MCF 10A (cell line): ENCODE measurements at regions of chr1 and their contacts with region 1.

Region 1: GRCh38 chr1:196309386-196309785 is 298.9 kb downstream of the KCNT2 start:
- DNase-seq: peak; percentile 62
- H3K4me3 Mint-ChIP-seq: no peak overlapping the region
- H3K27ac Mint-ChIP-seq: no peak overlapping the region
- H3K4me1 Mint-ChIP-seq: no peaks in the 10 kb centered on the region
- H3K27me3 Mint-ChIP-seq: no peaks in the 10 kb centered on the region
- CTCF ChIP-seq: peak; percentile 69

Region 2: DNA sequence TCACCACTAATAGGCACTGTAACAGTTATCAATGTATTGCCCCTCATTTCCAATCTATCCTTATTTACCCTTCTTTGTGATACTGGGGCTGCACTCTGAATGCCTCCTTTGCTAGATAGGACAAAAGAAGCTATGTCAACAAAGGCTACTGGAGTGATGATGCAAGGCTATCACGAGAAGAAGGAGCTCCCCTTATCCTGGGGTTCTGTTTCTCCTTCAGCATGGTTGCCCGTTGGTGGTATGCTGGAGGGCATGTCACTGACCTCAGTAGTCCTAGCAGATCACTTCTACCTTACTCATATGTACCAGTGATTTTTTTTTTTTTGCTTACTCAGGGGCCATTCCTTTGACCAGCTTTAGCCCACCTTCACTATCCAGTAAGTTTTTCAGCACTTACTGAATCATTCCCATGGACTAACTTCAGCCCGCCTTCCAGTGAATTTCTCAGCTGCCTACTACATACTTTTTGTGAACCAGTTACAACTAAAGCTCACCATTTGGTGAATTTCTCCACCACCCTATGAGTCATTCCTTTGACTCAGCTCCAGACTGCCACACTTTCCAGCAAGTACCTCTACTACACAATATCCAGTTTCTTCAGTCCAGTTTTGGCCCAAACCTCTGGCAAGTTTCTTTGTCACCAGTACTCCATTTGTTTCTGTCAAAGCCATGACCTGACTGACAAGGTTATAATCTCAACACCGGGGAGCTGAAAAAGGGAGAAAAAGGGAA is 645.7 kb before region 1 on chr1:
- CTCF ChIA-PET with region 1: no interaction called
- POLR2A ChIA-PET with region 1: no interaction called
- intact Hi-C with region 1: no loop called
- DNase-seq: peak; percentile 96
- H3K4me3 Mint-ChIP-seq: peak overlapping the region; percentile 12
- H3K27ac Mint-ChIP-seq: peak overlapping the region; percentile 73
- H3K4me1 Mint-ChIP-seq: peaks cover 18% of the 10 kb centered on the region
- H3K27me3 Mint-ChIP-seq: no peaks in the 10 kb centered on the region
- CTCF ChIP-seq: no peak

Region 3: GRCh38 chr1:195804547-195804946 is 504.8 kb before region 1 on chr1:
- CTCF ChIA-PET with region 1: no interaction called
- POLR2A ChIA-PET with region 1: no interaction called
- intact Hi-C with region 1: loop called (anchors 10 kb)
- DNase-seq: peak; percentile 25
- H3K4me3 Mint-ChIP-seq: no peak overlapping the region
- H3K27ac Mint-ChIP-seq: no peak overlapping the region
- H3K4me1 Mint-ChIP-seq: peaks cover 6% of the 10 kb centered on the region
- H3K27me3 Mint-ChIP-seq: no peaks in the 10 kb centered on the region
- CTCF ChIP-seq: peak; percentile 25

Region 4: GRCh38 chr1:195897076-195897475 is 412.3 kb before region 1 on chr1:
- CTCF ChIA-PET with region 1: interaction called, 3 read pairs
- POLR2A ChIA-PET with region 1: no interaction called
- intact Hi-C with region 1: loop called (anchors 1 kb)
- DNase-seq: peak; percentile 31
- H3K4me3 Mint-ChIP-seq: no peak overlapping the region
- H3K27ac Mint-ChIP-seq: no peak overlapping the region
- H3K4me1 Mint-ChIP-seq: peaks cover 36% of the 10 kb centered on the region
- H3K27me3 Mint-ChIP-seq: no peaks in the 10 kb centered on the region
- CTCF ChIP-seq: no peak

Region 5: DNA sequence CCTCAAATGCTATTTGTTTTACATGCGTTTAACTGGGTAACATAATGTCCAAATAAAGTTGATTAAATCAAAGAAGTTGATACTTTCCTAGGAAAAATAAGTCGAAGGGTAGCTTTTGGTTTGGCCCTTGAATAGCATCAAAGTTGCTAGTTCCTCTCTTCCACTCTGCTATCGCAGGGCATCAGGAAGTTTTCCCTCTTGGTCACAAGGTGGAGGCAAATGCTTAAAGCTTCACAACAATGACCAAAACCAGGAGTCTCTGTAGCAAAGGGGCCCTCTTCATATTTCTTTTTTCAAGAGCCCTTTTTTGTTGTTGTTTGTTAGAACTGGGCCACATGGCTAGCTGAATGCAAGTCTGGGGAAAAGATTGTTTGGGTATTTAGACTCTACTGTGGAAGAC is 369.5 kb before region 1 on chr1:
- CTCF ChIA-PET with region 1: interaction called, 49 read pairs
- POLR2A ChIA-PET with region 1: interaction called, 4 read pairs
- intact Hi-C with region 1: loop called (anchors 1 kb)
- DNase-seq: peak; percentile 51
- H3K4me3 Mint-ChIP-seq: no peak overlapping the region
- H3K27ac Mint-ChIP-seq: no peak overlapping the region
- H3K4me1 Mint-ChIP-seq: no peaks in the 10 kb centered on the region
- H3K27me3 Mint-ChIP-seq: no peaks in the 10 kb centered on the region
- CTCF ChIP-seq: peak; percentile 39

Region 6: DNA sequence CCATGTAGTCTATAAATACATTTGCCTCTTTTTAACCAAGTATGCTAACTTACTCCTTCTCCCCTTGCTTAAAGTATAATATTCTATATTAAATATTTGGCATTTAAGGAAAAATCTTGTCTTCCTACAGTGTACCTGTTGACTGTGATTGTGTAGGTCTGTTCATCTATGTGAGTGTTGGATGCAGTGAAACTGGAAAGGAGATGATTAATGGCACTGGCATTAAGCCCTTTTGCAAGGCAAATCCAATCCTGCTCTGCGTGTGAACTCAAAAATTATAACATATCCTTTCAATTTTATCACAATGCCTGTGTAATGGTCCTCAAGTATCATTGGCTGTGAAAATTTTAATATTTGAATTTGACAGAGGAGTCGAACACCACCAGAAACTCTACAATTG is 266.1 kb before region 1 on chr1:
- CTCF ChIA-PET with region 1: no interaction called
- POLR2A ChIA-PET with region 1: no interaction called
- intact Hi-C with region 1: no loop called
- DNase-seq: no peak
- H3K4me3 Mint-ChIP-seq: no peak overlapping the region
- H3K27ac Mint-ChIP-seq: no peak overlapping the region
- H3K4me1 Mint-ChIP-seq: no peaks in the 10 kb centered on the region
- H3K27me3 Mint-ChIP-seq: no peaks in the 10 kb centered on the region
- CTCF ChIP-seq: no peak

Region 7: GRCh38 chr1:196160066-196160795 is 149.2 kb before region 1 on chr1:
- CTCF ChIA-PET with region 1: interaction called, 14 read pairs
- POLR2A ChIA-PET with region 1: interaction called, 5 read pairs
- intact Hi-C with region 1: no loop called
- DNase-seq: peak; percentile 95
- H3K4me3 Mint-ChIP-seq: peak overlapping the region; percentile 57
- H3K27ac Mint-ChIP-seq: peak overlapping the region; percentile 89
- H3K4me1 Mint-ChIP-seq: peaks cover 14% of the 10 kb centered on the region
- H3K27me3 Mint-ChIP-seq: no peaks in the 10 kb centered on the region
- CTCF ChIP-seq: no peak

Region 8: DNA sequence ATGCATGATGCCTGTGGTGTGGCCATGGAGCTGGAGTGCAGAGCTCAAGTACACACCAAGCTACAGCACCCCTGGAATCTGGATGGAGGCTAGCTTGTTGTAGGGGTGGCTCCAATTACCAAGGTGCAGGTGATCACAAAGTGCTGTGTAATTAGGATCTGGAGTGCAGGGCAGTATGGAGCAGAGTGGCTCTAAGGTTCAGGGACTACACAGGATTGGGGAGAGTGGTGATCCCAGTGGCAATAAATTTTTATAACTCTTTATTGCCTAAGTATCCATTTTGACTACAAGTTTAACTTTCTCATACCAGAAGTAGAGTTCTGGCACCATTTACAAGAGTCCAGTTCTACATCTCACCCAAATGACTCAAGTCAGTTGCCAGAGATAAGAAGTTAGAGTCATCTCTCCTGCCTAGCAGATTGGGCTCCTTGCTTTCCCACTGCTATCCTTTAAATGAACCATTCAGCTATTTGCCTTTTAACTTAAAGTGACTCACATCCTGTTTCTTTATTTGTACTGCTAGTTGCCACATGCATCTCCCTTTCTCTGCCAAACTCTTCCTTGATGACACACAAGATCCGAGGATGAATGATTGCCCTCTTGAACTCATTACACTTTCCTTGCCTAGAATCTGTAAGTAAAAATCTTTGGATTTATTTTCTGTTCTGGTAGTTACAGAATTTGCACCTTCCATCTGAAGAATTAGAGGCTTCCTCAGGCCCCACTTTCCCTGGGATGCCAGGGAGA is 128.4 kb before region 1 on chr1:
- CTCF ChIA-PET with region 1: interaction called, 14 read pairs
- POLR2A ChIA-PET with region 1: interaction called, 3 read pairs
- intact Hi-C with region 1: no loop called
- DNase-seq: peak; percentile 98
- H3K4me3 Mint-ChIP-seq: no peak overlapping the region
- H3K27ac Mint-ChIP-seq: peak overlapping the region; percentile 68
- H3K4me1 Mint-ChIP-seq: peaks cover 21% of the 10 kb centered on the region
- H3K27me3 Mint-ChIP-seq: no peaks in the 10 kb centered on the region
- CTCF ChIP-seq: no peak

Region 9: GRCh38 chr1:196295766-196296165 is 13.6 kb before region 1 on chr1:
- CTCF ChIA-PET with region 1: interaction called, 16 read pairs
- POLR2A ChIA-PET with region 1: interaction called, 3 read pairs
- intact Hi-C with region 1: no loop called
- DNase-seq: peak; percentile 17
- H3K4me3 Mint-ChIP-seq: no peak overlapping the region
- H3K27ac Mint-ChIP-seq: no peak overlapping the region
- H3K4me1 Mint-ChIP-seq: peaks cover 7% of the 10 kb centered on the region
- H3K27me3 Mint-ChIP-seq: no peaks in the 10 kb centered on the region
- CTCF ChIP-seq: no peak